ENCODE measurements at regions of chr13 and their contacts with region 1.

Region 1: DNA sequence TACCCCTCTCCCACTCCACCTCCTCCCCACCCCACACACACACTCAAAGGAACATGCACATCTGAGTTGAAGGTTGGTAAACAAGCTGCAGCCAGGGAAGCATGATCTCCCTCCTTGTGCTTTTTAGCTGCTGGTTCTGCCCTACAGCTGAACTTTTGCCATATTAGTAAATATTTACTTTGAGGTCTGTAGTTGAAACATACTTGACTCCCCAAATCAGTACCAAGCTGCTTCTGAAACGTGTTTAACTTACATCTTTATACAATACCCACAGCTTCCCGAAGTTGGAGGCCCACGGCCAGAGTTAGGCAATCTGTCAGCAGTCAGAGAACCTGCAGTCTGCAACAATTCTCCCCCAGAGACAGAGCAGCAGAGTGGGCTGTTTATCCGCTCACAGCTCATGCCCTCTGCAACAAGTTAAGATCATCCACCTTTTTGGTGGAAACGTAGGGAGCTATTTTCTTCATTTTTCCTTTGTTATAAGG is 1.5 kb upstream of the PCDH20 start:
- DNase-seq: no peak
- H3K4me3 ChIP-seq: no peak overlapping the region
- H3K27ac ChIP-seq: no peak overlapping the region
- H3K4me1 ChIP-seq: no peaks in the 10 kb centered on the region
- H3K27me3 ChIP-seq: peaks cover 4% of the 10 kb centered on the region
- CTCF ChIP-seq: no peak

Region 2: GRCh38 chr13:60482012-60482411 is 935.1 kb before region 1 on chr13:
- CTCF ChIA-PET with region 1: no interaction called
- POLR2A ChIA-PET with region 1: no interaction called
- intact Hi-C with region 1: no loop called
- DNase-seq: no peak
- H3K4me3 ChIP-seq: no peak overlapping the region
- H3K27ac ChIP-seq: no peak overlapping the region; the same call in 1 of the 2 replicates
- H3K4me1 ChIP-seq: no peaks in the 10 kb centered on the region
- H3K27me3 ChIP-seq: no peaks in the 10 kb centered on the region
- CTCF ChIP-seq: no peak

Region 3: DNA sequence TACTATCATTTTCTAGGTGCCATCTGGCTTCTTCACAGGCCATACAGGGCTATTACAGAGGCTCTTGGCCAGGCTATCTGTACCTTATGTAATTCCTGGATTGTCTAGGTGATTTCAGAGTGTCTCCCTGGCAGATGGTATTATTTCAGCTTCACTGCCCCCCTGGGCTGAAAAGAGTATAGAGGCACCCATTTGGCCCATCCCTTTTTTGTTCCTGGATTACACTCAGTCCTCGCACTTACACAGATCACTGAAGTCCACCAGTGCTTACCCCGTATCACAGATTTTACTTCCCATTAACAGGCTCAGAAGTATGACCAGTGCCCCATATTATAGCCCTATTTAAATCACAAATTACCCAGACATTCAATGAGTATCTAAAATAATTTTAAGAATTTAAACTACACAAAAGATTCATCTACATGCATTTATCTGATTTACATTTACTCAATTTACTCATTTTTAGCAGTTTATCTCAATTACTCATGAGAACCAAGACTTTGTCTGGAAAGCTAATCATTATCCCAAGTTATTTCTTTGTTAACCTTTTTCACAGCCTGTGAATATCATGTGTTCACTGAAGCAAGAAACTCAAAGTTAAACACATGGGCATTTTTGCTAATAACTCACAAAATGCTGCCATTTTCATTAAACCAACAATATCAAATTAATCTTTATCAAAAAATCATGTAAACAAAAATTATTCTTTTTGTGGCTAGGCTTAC is 122.5 kb before region 1 on chr13:
- CTCF ChIA-PET with region 1: interaction called, 12 read pairs
- POLR2A ChIA-PET with region 1: no interaction called
- intact Hi-C with region 1: no loop called
- DNase-seq: no peak
- H3K4me3 ChIP-seq: no peak overlapping the region
- H3K27ac ChIP-seq: no peak overlapping the region
- H3K4me1 ChIP-seq: no peaks in the 10 kb centered on the region
- H3K27me3 ChIP-seq: no peaks in the 10 kb centered on the region
- CTCF ChIP-seq: no peak